ENCODE measurements at regions of chr17 and their contacts with region 1.

Region 1: GRCh38 chr17:79988185-79988971 is 47.3 kb downstream of the TBC1D16 start:
- DNase-seq: peak in 2 of 4 donors; percentile 41 to 43
- ATAC-seq: no peak
- H3K4me3 ChIP-seq: no peak overlapping the region
- H3K27ac ChIP-seq: peak overlapping the region in 2 of 4 donors; percentile 1 to 22
- H3K4me1 ChIP-seq: peaks cover 63% of the 10 kb centered on the region
- H3K27me3 ChIP-seq: no peaks in the 10 kb centered on the region
- CTCF ChIP-seq: no peak
- POLR2A ChIP-seq: no peak

Region 2: DNA sequence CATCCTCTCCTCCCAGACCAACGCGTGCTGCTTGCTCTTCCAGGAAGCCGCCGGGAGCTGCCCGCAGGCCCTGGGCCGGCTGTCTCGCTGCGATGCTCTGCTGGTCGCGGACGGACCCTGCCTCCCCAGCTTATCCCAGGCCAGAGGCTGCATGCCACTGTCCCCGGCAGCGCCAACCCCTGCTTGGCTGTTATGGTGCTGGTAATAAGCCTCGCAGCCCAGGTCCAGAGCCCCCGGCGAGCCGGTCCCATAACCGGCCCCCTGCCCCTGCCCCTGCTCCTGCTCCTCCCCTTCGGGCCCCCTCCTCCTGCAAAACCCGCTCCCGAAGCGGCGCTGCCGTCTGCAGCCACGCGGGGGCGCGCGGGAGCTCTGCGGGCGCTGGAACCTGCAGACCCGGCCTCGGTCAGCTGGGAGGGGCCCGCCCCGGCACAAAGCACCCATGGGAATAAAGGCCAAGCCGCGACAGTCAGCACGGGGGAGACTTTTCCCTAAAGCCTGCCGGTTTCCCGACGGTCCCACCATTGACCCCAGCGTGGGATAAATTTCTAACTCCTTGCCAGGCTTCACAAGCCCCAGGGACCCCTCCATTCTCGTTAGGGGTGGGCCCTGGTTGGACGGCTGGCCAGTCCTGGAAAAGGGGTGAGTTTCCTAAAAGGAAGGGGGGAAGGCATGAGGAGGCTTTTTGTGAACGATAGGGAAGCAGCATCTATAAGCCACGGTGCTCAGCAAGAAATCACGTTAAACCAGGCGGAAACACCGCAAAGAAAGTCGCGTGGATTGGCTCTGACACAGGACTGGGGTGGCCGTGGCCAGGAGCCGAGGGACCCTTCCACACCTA is 246.4 kb before region 1 on chr17:
- intact Hi-C with region 1: loop called (anchors 10 kb)
- DNase-seq: peak; percentile 72 to 85 (median 78)
- ATAC-seq: peak; percentile 57
- H3K4me3 ChIP-seq: no peak overlapping the region
- H3K27ac ChIP-seq: peak overlapping the region; percentile 25 to 83 (median 60)
- H3K4me1 ChIP-seq: peaks cover 45% of the 10 kb centered on the region
- H3K27me3 ChIP-seq: no peaks in the 10 kb centered on the region
- CTCF ChIP-seq: peak; percentile 76 to 99 (median 87)
- POLR2A ChIP-seq: no peak

Region 3: DNA sequence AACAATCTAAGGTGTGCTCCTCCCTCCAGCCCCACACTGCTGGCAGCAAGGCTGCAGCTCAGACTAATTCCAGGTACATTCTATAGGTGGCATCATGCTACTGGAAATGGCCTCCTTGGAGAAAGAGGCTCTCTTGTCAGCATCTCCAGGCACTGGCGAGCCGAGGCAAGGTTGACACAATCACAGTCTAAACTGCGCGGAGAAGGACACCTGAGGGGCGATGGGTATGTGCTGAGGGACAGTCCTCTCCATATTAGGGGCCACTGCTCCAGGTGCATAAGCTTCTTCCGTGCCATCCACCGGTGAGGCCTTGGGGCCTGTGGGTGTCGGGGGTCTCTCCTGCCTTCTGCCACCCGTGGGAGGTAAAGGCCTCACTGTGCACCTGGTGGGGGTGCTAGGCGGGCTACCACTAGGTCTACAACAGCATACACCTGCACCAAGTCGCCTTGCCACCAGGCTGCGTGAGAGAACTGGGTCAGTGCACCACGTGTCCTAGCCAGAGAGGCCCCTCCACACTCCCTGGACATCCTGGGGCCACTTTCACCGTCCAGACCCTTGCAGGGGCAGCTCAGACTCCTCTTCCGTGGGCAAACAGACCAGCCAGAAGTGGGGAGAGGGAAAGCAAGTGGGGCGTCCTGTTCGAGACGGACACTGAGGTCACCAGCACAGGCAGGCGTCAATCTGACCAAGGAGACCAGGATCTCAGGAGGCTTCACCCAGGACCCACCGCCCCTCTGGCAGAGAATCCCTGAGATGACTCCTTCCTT is 179.4 kb before region 1 on chr17:
- intact Hi-C with region 1: loop called (anchors 10 kb)
- DNase-seq: peak; percentile 59 to 71 (median 67)
- ATAC-seq: peak; percentile 72
- H3K4me3 ChIP-seq: no peak overlapping the region
- H3K27ac ChIP-seq: no peak overlapping the region
- H3K4me1 ChIP-seq: peaks cover 42% of the 10 kb centered on the region
- H3K27me3 ChIP-seq: peaks cover 3 to 59% of the 10 kb centered on the region in 2 donors
- CTCF ChIP-seq: peak in 6 of 7 experiments; percentile 21 to 82 (median 72)
- POLR2A ChIP-seq: no peak

Region 4: GRCh38 chr17:80160536-80160935 is 172.2 kb after region 1 on chr17:
- intact Hi-C with region 1: no loop called
- DNase-seq: no peak
- ATAC-seq: no peak
- H3K4me3 ChIP-seq: no peak overlapping the region
- H3K27ac ChIP-seq: no peak overlapping the region
- H3K4me1 ChIP-seq: no peaks in the 10 kb centered on the region
- H3K27me3 ChIP-seq: no peaks in the 10 kb centered on the region
- CTCF ChIP-seq: no peak
- POLR2A ChIP-seq: no peak

Measured in body of pancreas (tissue), 4 donors.